ENCODE measurements at regions of chr9 and their contacts with region 1.

Region 1: DNA sequence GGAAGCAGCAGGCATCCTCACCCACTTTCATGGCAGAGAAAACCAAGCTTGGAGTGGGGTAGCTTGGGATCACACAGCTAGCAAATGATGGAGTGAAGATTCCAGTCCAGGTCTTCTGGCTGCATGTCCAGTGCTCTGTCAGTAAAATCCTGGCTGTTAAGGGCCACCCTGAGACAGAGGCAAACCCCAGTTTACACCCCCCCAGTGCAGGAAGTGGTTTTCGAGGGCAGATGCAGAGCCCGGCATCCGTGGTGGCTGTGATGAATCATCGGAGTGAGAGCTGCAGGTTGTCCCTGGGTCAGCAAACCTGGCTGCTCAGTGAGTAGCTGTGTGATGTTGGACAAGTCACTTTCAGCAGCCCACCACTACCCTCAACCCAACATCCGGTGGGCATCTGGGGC is 115.4 kb downstream of the RGS3 start:
- DNase-seq: peak; percentile 91
- H3K4me3 Mint-ChIP-seq: peak overlapping the region; percentile 85
- H3K27ac Mint-ChIP-seq: peak overlapping the region; percentile 97
- H3K4me1 Mint-ChIP-seq: peaks cover 80% of the 10 kb centered on the region
- H3K27me3 Mint-ChIP-seq: no peaks in the 10 kb centered on the region

Region 2: GRCh38 chr9:113446323-113446740 is 132.6 kb before region 1 on chr9:
- CTCF ChIA-PET with region 1: interaction called, 11 read pairs
- POLR2A ChIA-PET with region 1: no interaction called
- DNase-seq: no peak
- H3K4me3 Mint-ChIP-seq: no peak overlapping the region
- H3K27ac Mint-ChIP-seq: no peak overlapping the region
- H3K4me1 Mint-ChIP-seq: no peaks in the 10 kb centered on the region
- H3K27me3 Mint-ChIP-seq: no peaks in the 10 kb centered on the region

Region 3: DNA sequence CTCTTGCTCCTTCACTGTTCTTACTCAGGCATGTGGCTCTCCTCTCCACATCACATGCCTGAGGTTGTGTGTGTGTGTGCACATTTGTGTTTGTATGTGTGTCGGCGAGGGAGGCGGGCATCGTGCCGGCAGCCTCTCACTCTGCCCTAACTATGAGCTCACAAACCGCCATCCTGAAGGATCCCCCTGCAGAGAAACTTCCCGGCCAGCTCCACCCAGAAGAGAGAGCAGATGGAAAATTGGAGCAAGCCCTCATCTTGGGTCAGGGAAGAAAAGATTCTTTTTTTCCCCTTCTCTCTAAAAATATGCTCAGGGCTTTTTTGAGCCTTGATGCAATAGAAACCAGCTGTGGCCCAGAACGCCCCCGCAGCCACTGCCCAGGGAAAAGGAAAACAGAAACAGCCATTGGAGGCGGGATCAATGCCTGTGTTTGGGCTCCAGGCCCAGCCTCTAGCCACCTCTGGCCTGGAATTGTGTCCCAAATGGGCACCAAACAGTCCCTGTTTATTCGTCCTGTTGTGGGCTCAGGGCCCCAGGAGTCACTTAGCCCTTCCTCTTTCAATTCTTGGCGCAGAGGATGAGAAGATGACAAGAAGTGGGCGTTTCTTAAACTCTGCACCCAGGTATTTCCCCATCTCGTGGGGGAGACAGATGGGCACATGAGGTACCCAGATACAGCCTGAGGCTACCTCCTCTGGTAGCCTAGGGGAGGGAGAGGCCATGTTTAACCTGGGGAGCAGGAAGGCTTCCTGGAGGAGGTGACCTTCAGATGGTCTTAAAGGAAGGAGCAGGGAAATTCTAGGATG is 36.2 kb after region 1 on chr9:
- CTCF ChIA-PET with region 1: no interaction called
- POLR2A ChIA-PET with region 1: no interaction called
- DNase-seq: no peak
- H3K4me3 Mint-ChIP-seq: no peak overlapping the region
- H3K27ac Mint-ChIP-seq: no peak overlapping the region
- H3K4me1 Mint-ChIP-seq: peaks cover 4% of the 10 kb centered on the region
- H3K27me3 Mint-ChIP-seq: no peaks in the 10 kb centered on the region